MCF 10A (cell line): ENCODE measurements at regions of chr5 and their contacts with region 1.

Region 1: GRCh38 chr5:119386596-119387344 is 31.0 kb downstream of the TNFAIP8 start:
- DNase-seq: peak; percentile 45
- H3K4me3 Mint-ChIP-seq: no peak overlapping the region
- H3K27ac Mint-ChIP-seq: peak overlapping the region; percentile 76
- H3K4me1 Mint-ChIP-seq: peaks cover 53% of the 10 kb centered on the region
- H3K27me3 Mint-ChIP-seq: no peaks in the 10 kb centered on the region
- CTCF ChIP-seq: no peak

Region 2: GRCh38 chr5:119367502-119368237 is 19.1 kb before region 1 on chr5:
- CTCF ChIA-PET with region 1: interaction called, 7 read pairs
- POLR2A ChIA-PET with region 1: interaction called, 492 read pairs
- intact Hi-C with region 1: no loop called
- DNase-seq: peak; percentile 81
- H3K4me3 Mint-ChIP-seq: peak overlapping the region; percentile 45
- H3K27ac Mint-ChIP-seq: peak overlapping the region; percentile 90
- H3K4me1 Mint-ChIP-seq: peaks cover 47% of the 10 kb centered on the region
- H3K27me3 Mint-ChIP-seq: no peaks in the 10 kb centered on the region
- CTCF ChIP-seq: no peak

Region 3: DNA sequence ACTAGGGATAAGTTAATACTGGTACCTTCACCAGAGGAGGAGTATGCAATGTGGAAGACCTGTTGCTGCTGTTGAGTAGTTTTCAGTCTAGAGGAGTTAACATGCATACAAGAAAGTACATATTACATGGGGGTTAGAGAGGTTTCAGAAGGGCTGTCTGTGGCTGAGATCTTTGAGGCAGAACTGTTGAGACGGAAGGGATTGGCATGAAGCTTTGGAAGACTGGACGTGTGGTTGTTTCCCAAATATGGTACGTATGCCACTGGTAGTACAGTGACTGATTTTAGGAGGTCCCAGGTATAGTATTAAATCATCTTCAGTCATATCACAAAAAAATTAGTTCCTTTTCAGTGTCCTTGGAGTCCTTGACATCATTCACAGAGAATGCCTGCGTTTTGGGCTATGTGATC is 13.3 kb before region 1 on chr5:
- CTCF ChIA-PET with region 1: interaction called, 4 read pairs
- POLR2A ChIA-PET with region 1: interaction called, 492 read pairs
- intact Hi-C with region 1: no loop called
- DNase-seq: no peak
- H3K4me3 Mint-ChIP-seq: no peak overlapping the region
- H3K27ac Mint-ChIP-seq: no peak overlapping the region
- H3K4me1 Mint-ChIP-seq: peaks cover 8% of the 10 kb centered on the region
- H3K27me3 Mint-ChIP-seq: no peaks in the 10 kb centered on the region
- CTCF ChIP-seq: no peak

Region 4: DNA sequence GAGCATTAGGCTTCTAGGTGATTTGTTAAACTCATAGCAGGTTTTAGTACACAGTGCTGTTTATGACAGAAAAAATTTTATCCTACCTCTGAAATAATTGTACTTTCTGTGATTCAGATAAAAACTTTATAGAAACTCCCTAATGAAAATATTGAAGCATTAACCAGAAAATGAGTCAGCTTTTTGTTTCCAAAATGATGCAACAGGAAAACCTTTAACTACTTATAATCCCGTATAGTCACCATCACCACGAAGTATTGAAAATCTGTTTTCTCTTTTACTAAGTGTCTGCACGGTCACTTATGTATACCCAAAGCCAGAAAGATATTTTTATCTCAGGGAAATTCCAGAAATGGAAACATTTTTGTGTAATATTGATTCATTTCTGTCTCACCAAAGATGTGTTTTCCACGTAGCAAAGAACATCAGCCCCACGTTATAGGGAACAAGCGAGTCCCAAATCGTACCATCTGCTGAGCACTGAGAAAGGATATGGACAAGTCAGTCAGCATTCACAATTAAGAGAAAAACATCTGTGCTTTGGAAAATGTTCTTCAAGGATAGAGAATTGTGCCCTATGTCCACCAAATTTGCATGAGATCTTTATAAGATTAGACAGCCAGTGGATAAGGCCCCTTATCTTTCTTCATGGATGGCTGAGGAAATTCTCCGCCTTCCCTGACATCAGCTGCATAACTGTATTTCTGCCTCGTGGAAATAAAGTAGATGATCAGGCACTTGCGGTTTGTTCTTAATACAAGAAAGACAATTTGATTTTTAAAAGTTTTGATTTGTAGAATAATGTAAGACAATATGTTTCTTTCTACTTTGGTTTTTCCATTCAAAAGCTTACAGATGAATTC is 11.0 kb after region 1 on chr5:
- CTCF ChIA-PET with region 1: interaction called, 3 read pairs
- POLR2A ChIA-PET with region 1: interaction called, 16 read pairs
- intact Hi-C with region 1: no loop called
- DNase-seq: peak; percentile 87
- H3K4me3 Mint-ChIP-seq: peak overlapping the region; percentile 63
- H3K27ac Mint-ChIP-seq: peak overlapping the region; percentile 94
- H3K4me1 Mint-ChIP-seq: peaks cover 48% of the 10 kb centered on the region
- H3K27me3 Mint-ChIP-seq: no peaks in the 10 kb centered on the region
- CTCF ChIP-seq: no peak